Adrenal gland (tissue), 19 donors: ENCODE measurements at regions of chr7 and their contacts with region 1.

Region 1: DNA sequence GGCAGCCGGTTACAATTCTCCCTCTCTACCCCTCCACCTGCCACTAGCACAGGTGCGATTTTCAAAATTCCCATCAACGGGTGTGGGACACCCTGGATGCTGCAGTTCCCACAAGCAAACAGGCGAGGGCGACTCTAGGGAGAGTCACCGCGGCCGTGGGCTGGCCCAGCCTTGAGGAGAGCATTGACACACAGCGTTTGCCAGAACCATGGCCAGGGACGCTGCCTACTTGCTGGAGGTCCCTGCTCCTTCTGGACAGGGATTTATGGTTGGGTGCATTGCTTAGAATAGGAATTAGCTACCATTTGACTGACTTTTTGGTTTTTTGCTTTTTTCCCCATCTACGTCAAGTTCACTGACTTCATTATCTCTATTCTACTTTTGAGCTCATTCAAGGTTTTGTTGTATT is 19.0 kb upstream of the CLDN4 start:
- DNase-seq: peak; percentile 74 to 84 (median 79)
- H3K4me3 ChIP-seq: no peak overlapping the region
- H3K27ac ChIP-seq: no peak overlapping the region
- H3K4me1 ChIP-seq: no peaks in the 10 kb centered on the region
- H3K27me3 ChIP-seq: no peaks in the 10 kb centered on the region
- CTCF ChIP-seq: peak; percentile 76 to 89 (median 78)
- POLR2A ChIP-seq: no peak

Region 2: DNA sequence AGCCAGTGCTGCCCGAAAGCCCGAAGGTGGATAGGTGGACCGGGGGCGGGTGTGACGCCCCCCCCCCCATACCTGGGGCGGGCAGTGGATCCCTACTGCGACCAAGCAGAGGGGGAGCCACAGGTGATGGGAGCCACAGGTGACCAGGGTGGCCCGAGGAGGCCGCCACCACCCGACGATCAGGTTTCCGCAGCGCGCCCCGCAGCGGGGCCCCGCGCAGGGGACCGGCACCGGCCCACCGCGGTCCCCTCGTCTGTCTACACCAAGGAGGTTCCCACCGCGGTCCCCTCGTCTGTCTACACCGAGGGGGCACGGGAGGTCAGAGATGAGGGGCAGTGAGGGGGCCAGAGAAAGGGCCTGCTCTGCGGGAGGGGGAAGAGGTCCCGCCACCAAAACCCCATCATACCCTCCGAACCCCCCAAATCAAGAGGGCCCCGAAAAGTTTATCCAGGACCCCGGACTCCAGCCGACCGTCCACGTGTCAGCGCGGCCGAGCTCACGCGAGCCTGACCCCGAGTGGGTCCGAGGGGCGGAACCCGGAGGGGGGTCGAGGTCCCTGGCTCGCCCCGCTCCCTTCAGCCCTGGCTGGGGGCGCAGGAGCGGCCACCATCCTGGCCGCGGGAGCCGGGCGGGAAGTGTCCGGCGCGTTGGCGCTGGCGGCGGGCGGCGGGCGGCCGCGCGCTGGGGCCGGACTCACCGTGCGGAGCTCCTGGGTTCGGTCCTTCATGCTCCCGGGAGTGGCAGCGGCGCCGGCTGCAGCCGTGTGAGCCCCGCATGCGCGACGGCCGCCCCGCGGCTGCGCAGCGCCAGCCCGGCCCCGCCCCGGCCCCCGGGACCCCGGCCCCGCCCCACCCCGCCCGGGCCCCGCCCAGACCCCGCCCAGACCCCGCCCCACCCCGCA is 92.6 kb before region 1 on chr7 and contains the start of gene STX1A:
- intact Hi-C with region 1: no loop called
- DNase-seq: peak; percentile 56 to 80 (median 70)
- H3K4me3 ChIP-seq: peak within 1 kb of the TSS in 3 of 4 donors; percentile 33 to 89 (median 59)
- H3K27ac ChIP-seq: no peak within 1 kb of the TSS
- H3K4me1 ChIP-seq: peaks cover 8 to 16% of the 10 kb centered on the region in 2 donors
- H3K27me3 ChIP-seq: no peaks in the 10 kb centered on the region
- CTCF ChIP-seq: no peak
- POLR2A ChIP-seq: peak; percentile 32 to 33
- total RNA-seq, gene STX1A: 0.52 to 8.0 (median 4.5) TPM

Region 3: DNA sequence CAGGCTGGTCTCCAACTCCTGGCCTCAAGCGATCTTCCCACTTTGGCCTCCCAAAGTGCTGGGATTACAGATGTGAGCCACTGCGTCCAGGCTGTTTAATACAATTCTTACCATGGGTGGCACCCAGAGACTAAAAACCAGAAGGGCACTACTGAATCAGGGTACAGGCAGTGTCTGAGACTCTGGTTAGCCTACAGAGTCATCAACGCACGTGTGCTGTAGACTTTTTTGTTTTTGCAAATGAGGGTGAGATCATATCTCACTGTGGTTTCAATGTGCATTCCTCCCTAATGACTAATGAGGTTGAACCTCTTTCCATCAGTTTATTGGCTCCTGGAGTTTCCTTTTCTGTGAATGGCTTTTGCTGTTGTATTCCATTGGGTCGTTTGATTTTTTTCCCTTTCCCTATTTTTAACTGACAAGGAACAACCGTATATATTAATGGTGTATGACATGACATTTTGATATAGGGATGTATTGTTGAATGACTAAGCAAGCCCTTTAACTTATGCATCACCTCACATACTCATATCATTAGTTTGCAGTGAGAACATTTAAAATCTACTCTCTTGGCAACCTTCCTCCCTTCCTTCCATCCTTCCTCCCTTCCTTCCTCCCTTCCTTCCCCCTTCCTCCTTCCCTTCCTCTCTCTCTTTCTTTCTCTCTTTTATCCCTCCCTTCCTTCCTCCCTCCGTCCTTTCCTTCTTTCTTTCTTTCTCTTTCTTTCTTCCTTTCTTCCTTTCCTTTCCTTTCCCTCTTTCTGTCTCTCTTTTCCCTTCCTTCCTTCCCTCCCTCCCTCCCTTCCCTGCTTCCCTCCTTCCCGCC is 39.9 kb after region 1 on chr7:
- intact Hi-C with region 1: loop called (anchors 2 kb)
- DNase-seq: peak in 2 of 7 donors; percentile 25 to 48
- H3K4me3 ChIP-seq: no peak overlapping the region
- H3K27ac ChIP-seq: peak overlapping the region in 1 of 5 donors; percentile 59
- H3K4me1 ChIP-seq: peaks cover 0 to 6% of the 10 kb centered on the region in 2 donors
- H3K27me3 ChIP-seq: no peaks in the 10 kb centered on the region
- CTCF ChIP-seq: no peak
- POLR2A ChIP-seq: no peak

Region 4: GRCh38 chr7:73856941-73857340 is 45.2 kb after region 1 on chr7:
- intact Hi-C with region 1: loop called (anchors 2 kb)
- DNase-seq: no peak
- H3K4me3 ChIP-seq: no peak overlapping the region
- H3K27ac ChIP-seq: no peak overlapping the region
- H3K4me1 ChIP-seq: peaks cover 0 to 6% of the 10 kb centered on the region in 2 donors
- H3K27me3 ChIP-seq: no peaks in the 10 kb centered on the region
- CTCF ChIP-seq: no peak
- POLR2A ChIP-seq: no peak